H1 (cell line): ENCODE measurements at regions of chr15 and their contacts with region 1.

Region 1: DNA sequence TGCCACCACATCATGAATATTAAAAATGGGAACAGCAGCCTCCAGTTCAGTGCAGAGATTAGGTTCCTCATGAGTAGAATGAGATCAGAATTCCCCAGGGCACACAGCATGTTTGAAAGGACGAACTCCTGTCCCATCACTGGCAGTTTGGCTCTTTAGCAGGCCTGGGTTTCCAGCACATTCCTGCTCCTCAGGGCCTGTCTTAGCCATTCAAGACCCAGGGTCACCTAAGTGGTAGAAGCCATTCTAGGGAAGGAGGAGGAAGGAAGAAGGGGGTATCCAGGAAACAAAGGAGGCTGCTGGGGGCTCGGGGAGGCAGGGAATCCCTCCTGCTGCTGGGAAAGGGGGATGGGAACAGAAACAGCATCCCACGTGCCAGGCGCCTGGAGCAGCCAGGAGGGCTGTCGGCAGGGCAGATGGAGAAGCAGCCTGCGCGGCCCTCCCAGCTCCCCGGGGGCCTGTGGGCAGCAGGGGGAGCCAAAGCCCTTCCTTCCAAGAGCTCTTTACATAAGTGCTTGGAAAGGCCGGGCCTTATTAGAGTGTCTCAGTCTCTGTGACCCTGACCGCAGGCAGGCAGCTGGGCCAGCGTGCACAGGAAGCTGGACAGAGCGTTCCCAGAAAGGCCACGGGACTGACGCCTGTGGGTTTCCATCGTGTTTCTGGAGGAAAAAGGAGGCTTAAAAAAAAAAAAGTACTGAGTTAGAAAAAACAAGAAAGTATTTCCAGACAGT is 24.7 kb downstream of the LOXL1 start:
- DNase-seq: peak; percentile 78 to 89
- H3K4me3 ChIP-seq: no peak overlapping the region; a peak in 1 of 8 replicates
- H3K27ac ChIP-seq: no peak overlapping the region
- H3K4me1 ChIP-seq: peaks cover 6 to 16% (median 12%) of the 10 kb centered on the region in 4 experiments
- H3K27me3 ChIP-seq: no peaks in the 10 kb centered on the region
- CTCF ChIP-seq: peak; percentile 68 to 92 (median 81)
- EP300 ChIP-seq: no peak
- POLR2A ChIP-seq: no peak
- RAD21 ChIP-seq: peak; percentile 81 to 87

Region 2: DNA sequence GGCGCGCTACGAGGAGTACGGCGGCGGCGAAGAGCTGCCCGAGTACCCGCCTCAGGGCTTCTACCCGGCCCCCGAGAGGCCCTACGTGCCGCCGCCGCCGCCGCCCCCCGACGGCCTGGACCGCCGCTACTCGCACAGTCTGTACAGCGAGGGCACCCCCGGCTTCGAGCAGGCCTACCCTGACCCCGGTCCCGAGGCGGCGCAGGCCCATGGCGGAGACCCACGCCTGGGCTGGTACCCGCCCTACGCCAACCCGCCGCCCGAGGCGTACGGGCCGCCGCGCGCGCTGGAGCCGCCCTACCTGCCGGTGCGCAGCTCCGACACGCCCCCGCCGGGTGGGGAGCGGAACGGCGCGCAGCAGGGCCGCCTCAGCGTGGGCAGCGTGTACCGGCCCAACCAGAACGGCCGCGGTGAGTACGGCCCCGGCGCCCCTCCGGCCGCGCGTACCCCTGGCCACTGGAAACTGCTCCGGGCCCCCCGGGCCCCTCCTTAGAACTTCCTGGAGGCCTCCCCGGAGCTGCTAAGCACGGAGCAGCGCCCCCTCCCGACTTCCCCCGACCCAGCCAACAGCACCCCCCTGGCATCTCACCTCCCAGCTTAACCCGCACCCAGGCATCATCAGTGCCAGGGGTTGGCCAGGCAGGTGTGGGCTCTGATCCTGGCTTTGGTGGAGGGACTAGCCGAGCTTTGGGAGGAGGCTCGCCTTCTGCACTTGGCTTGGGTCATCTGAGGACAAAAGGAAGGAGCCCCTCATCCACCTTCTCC is 23.3 kb before region 1 on chr15:
- CTCF ChIA-PET with region 1: interaction called, 16 read pairs
- POLR2A ChIA-PET with region 1: interaction called, 3 read pairs
- DNase-seq: peak in 1 of 2 experiments; percentile 86
- H3K4me3 ChIP-seq: peak overlapping the region; percentile 35 to 71 (median 53)
- H3K27ac ChIP-seq: no peak overlapping the region
- H3K4me1 ChIP-seq: peaks cover 0 to 35% (median 30%) of the 10 kb centered on the region in 4 experiments; a peak in 6 of 7 replicates
- H3K27me3 ChIP-seq: peaks cover 0 to 6% (median 2%) of the 10 kb centered on the region in 4 experiments; a peak in 3 of 7 replicates
- CTCF ChIP-seq: peak; percentile 33 to 65 (median 47)
- EP300 ChIP-seq: no peak
- POLR2A ChIP-seq: no peak
- RAD21 ChIP-seq: peak in 1 of 2 experiments; percentile 2; a peak in 1 of 4 replicates

Region 3: DNA sequence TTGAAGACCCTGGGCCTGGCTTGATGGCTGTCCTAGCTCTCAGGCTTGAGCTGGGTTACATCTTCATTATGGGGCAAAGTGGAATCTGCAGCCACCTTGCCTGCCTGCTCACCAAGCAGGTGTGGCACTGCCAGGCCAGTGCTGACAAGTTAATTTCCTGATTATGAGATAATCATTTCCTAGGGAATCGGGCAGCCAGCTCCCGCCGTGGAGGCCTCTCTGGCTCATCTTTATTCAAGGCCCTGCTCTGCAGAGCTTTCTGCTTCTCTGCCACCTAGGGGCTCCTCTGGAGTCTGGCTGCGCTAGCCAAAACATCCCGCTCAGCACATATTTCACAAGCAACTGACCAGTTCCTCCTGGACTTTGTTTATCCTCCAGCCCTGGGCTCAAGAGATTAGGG is 14.8 kb before region 1 on chr15:
- CTCF ChIA-PET with region 1: interaction called, 16 read pairs
- POLR2A ChIA-PET with region 1: interaction called, 3 read pairs
- DNase-seq: no peak
- H3K4me3 ChIP-seq: no peak overlapping the region
- H3K27ac ChIP-seq: no peak overlapping the region
- H3K4me1 ChIP-seq: peaks cover 0 to 3% (median 2%) of the 10 kb centered on the region in 4 experiments; a peak in 4 of 7 replicates
- H3K27me3 ChIP-seq: no peaks in the 10 kb centered on the region
- CTCF ChIP-seq: peak in 2 of 3 experiments; percentile 9 to 18; a peak in 2 of 4 replicates
- EP300 ChIP-seq: no peak
- POLR2A ChIP-seq: no peak
- RAD21 ChIP-seq: peak in 1 of 2 experiments; percentile 18; a peak in 1 of 4 replicates